Activated CD4-positive, alpha-beta memory T cell treated with anti-CD3 and anti-CD28 coated beads for 36 hours (primary cell): ENCODE measurements at regions of chr19 and their contacts with region 1.

Region 1: DNA sequence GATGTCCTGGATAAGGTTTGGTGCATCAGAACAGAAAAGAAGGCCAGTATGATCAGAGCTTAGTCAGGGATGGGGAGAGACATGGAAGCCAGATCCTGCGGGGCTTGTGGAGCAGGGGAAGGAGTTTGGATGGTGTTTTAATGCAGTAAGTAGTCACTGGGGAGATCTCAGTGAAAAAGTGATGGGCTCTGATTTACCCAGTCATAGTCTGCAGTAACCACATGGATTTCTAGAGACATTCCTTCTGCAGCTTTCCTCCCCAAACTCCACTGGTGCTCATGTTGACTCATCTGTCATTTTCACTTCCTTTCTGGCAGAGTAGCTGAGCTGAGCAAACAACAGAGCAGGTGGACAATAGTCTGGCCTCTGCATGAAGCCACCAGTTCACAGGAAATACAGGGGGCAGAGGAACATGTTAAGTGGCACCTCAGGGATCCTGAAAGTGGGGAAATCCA is 144.1 kb downstream of the DPF1 start:
- DNase-seq: peak; percentile 19
- H3K4me3 Mint-ChIP-seq: no peak overlapping the region
- H3K27ac Mint-ChIP-seq: peak overlapping the region; percentile 54
- H3K4me1 Mint-ChIP-seq: peaks cover 16% of the 10 kb centered on the region
- H3K27me3 Mint-ChIP-seq: no peaks in the 10 kb centered on the region

Region 2: DNA sequence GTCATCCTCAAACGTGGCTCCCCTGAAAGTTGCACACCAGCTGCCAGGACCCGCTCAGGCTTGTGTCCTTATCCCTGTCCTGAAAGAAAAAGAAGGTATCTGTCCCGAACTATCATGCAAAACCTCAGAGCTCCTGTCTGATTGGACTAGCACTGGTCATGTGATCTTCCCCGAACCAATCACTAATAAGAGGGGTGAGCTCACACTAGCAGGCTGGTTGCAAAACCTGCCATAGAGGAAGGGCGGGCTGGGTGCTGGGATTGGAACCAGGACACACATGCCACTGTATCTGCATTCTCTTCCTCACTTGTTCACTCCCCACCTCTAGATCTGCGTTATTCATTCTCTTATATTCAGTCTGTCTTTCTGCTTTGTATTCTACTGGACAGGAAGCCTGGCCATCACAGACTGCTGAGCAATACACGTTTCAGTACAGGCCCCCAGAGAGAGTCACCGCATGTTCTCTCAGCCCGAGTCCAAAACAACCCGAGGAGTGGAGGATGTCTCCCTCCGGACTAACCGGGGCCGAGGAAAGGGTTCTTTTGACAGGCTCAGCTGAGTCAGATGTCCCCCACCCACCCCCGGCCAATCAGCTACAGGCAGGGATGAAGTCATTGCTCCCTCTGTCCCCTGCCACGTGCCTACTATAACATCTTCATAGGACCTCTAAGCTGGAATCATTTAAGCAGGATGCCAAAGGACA is 75.3 kb before region 1 on chr19:
- CTCF ChIA-PET with region 1: no interaction called
- POLR2A ChIA-PET with region 1: interaction called, 8 read pairs
- intact Hi-C with region 1: loop called (anchors 2 kb)
- DNase-seq: peak; percentile 29
- H3K4me3 Mint-ChIP-seq: no peak overlapping the region
- H3K27ac Mint-ChIP-seq: no peak overlapping the region
- H3K4me1 Mint-ChIP-seq: peaks cover 8% of the 10 kb centered on the region
- H3K27me3 Mint-ChIP-seq: no peaks in the 10 kb centered on the region

Region 3: DNA sequence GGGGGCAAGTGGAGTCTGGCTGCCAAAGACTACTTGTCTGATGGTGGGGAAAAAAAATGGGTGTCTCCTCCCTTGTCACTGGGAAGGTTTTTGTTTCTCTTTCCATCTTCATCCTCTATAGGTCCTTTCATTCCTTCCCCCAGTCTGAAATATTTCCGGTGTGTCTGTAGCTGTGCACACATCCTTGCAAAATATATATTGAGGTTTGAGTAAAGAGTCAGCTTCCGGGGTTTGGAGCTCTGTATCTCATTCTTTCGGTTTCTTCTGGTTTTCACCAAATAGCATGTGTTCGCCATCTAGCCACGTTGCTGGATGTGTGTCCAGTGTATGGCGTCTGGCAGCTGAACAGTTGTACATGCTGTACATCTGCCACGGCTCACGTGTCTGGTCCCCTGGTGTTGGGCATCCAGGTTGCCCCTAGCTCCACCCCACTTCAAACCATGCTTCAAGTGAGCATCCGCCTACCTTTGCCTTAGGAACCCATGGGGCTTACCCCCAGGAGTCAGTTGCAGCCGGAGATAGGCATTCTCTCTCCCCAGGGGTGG is 30.8 kb before region 1 on chr19:
- CTCF ChIA-PET with region 1: interaction called, 3 read pairs
- POLR2A ChIA-PET with region 1: interaction called, 6 read pairs
- intact Hi-C with region 1: loop called (anchors 1 kb)
- DNase-seq: peak; percentile 74
- H3K4me3 Mint-ChIP-seq: peak overlapping the region; percentile 68
- H3K27ac Mint-ChIP-seq: peak overlapping the region; percentile 96
- H3K4me1 Mint-ChIP-seq: peaks cover 46% of the 10 kb centered on the region
- H3K27me3 Mint-ChIP-seq: no peaks in the 10 kb centered on the region

Region 4: GRCh38 chr19:38095411-38096308 is 15.7 kb after region 1 on chr19:
- CTCF ChIA-PET with region 1: interaction called, 12 read pairs
- POLR2A ChIA-PET with region 1: interaction called, 3 read pairs
- intact Hi-C with region 1: no loop called
- DNase-seq: peak; percentile 71
- H3K4me3 Mint-ChIP-seq: no peak overlapping the region
- H3K27ac Mint-ChIP-seq: no peak overlapping the region
- H3K4me1 Mint-ChIP-seq: no peaks in the 10 kb centered on the region
- H3K27me3 Mint-ChIP-seq: no peaks in the 10 kb centered on the region